Spleen (tissue), 13 donors: ENCODE measurements at regions of chr20 and their contacts with region 1.

Region 1: GRCh38 chr20:36199345-36200257 is 36.7 kb upstream of the AAR2 start:
- DNase-seq: peak; percentile 82
- H3K4me3 ChIP-seq: no peak overlapping the region
- H3K27ac ChIP-seq: no peak overlapping the region
- H3K4me1 ChIP-seq: peaks cover 0 to 14% (median 9%) of the 10 kb centered on the region in 6 donors
- H3K27me3 ChIP-seq: no peaks in the 10 kb centered on the region
- CTCF ChIP-seq: peak; percentile 69 to 93 (median 87)
- POLR2A ChIP-seq: no peak

Region 2: GRCh38 chr20:35741892-35742740 is 457.5 kb before region 1 on chr20 and contains the start of gene RBM39:
- intact Hi-C with region 1: no loop called
- DNase-seq: peak; percentile 99
- H3K4me3 ChIP-seq: peak within 1 kb of the TSS; percentile 64 to 88 (median 78)
- H3K27ac ChIP-seq: peak within 1 kb of the TSS; percentile 98 to 100 (median 100)
- H3K4me1 ChIP-seq: peaks cover 43 to 67% (median 57%) of the 10 kb centered on the region in 6 donors
- H3K27me3 ChIP-seq: no peaks in the 10 kb centered on the region
- CTCF ChIP-seq: peak; percentile 8 to 76 (median 62)
- POLR2A ChIP-seq: peak; percentile 96 to 98 (median 97)
- total RNA-seq, gene RBM39: 386 to 649 (median 405) TPM

Region 3: GRCh38 chr20:35994994-35995453 is 204.6 kb before region 1 on chr20:
- intact Hi-C with region 1: loop called (anchors 10 kb)
- DNase-seq: peak; percentile 93
- H3K4me3 ChIP-seq: no peak overlapping the region
- H3K27ac ChIP-seq: no peak overlapping the region
- H3K4me1 ChIP-seq: peaks cover 0 to 14% (median 5%) of the 10 kb centered on the region in 6 donors
- H3K27me3 ChIP-seq: no peaks in the 10 kb centered on the region
- CTCF ChIP-seq: peak; percentile 53 to 88 (median 82)
- POLR2A ChIP-seq: no peak

Region 4: GRCh38 chr20:36085686-36086267 is 113.8 kb before region 1 on chr20:
- intact Hi-C with region 1: no loop called
- DNase-seq: no peak
- H3K4me3 ChIP-seq: no peak overlapping the region
- H3K27ac ChIP-seq: no peak overlapping the region
- H3K4me1 ChIP-seq: no peaks in the 10 kb centered on the region
- H3K27me3 ChIP-seq: peaks cover 0 to 26% (median 2%) of the 10 kb centered on the region in 7 donors
- CTCF ChIP-seq: no peak
- POLR2A ChIP-seq: no peak

Region 5: DNA sequence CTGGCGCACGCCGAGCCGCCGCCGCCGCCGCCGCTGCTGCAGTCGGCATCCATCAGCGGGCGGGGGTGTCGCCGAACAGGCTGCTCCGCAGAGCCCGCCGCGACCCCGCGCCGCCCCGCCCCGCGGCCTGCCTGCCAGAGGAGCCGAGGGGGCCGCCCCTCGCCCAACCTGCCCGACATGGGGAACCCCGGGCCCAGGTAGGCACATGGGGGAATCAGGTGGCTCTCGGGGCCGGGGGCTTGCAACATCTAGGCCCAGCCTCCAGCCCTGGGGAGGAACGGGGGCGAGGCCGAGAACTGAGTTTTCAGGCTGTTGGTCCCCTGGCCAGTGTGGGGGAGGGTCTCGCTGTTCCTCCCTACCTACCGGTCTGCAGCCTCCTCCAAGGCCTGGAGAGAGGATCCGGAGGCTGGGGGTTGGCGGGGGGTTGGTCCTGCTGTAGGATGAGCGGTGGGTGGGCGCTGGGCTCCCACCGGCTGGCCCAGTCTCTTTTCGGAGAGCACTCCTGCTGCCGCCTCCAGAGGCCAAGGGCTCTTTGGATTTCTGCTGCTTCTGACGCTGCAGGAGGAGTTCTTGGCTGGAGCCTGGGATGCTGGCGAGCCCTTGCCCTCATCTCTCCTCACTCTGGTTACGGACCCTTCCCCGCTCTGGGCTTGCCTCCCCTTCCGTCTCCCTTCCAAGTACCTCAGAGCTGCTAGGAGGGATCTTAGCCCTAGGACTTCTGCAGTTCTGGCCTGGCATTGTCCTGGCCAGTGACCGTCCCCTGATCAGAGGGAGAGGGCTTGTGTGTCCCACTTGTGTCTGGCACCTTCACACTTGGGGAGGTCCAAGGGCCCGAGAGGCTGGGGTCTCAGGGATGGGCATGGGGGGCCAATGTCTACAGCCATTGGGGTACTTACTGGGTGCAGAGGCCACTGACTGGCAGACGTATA is 44.6 kb before region 1 on chr20 and contains the start of gene EPB41L1:
- intact Hi-C with region 1: loop called (anchors 5 kb)
- DNase-seq: no peak
- H3K4me3 ChIP-seq: peak within 1 kb of the TSS; percentile 36 to 73 (median 47)
- H3K27ac ChIP-seq: peak within 1 kb of the TSS in 7 of 8 donors; percentile 4 to 68 (median 57)
- H3K4me1 ChIP-seq: peaks cover 0 to 48% (median 25%) of the 10 kb centered on the region in 6 donors
- H3K27me3 ChIP-seq: peaks cover 0 to 35% (median 10%) of the 10 kb centered on the region in 7 donors
- CTCF ChIP-seq: no peak
- POLR2A ChIP-seq: no peak
- total RNA-seq, gene EPB41L1: 8.7 to 18.6 (median 16.2) TPM

Region 6: DNA sequence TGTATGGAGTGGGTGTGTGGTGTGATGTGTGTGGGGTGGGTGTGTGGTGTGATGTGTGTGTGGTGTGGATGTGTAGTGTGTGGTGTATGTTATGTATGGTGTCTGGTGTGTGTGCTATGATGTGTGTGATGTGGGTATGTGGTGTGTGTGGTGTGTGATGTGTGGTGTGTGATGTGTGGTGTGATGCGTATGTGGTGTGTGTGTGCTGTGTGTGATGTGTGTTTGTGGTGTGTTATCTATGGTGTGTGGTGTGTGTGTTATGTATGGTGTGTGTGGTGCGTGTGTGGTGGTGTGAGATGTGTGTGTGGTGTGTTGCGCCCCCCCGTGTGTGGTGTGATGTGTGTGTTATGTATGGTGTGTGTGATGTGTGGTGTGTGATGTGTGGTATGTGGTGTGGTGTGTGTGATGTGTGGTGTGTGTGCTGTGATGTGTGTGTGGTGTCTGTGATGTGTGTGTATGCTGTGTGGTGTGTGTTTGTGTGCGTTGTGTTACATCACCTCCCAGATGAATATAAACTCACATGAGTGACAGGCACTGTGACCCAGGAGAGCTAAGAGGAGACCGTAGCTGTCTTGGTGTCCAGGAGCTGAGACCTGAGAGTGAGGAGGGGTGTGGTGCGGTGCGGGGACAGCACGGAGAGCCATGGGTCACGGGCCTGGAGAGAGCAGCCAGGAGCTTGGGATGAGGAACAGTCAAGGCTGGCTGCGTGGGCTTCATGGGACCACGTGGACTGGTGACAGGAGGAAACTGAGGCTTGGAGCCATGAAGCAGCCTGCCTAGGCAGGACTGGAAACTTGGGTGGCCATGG is 115.3 kb after region 1 on chr20:
- intact Hi-C with region 1: no loop called
- DNase-seq: peak; percentile 5
- H3K4me3 ChIP-seq: no peak overlapping the region
- H3K27ac ChIP-seq: no peak overlapping the region
- H3K4me1 ChIP-seq: no peaks in the 10 kb centered on the region
- H3K27me3 ChIP-seq: peaks cover 0 to 57% (median 0%) of the 10 kb centered on the region in 7 donors
- CTCF ChIP-seq: no peak
- POLR2A ChIP-seq: no peak

Region 7: GRCh38 chr20:36439040-36439730 is 239.6 kb after region 1 on chr20:
- intact Hi-C with region 1: loop called (anchors 2 kb)
- DNase-seq: peak; percentile 88
- H3K4me3 ChIP-seq: no peak overlapping the region
- H3K27ac ChIP-seq: no peak overlapping the region
- H3K4me1 ChIP-seq: peaks cover 4 to 18% (median 12%) of the 10 kb centered on the region in 6 donors
- H3K27me3 ChIP-seq: peaks cover 0 to 15% (median 0%) of the 10 kb centered on the region in 7 donors
- CTCF ChIP-seq: peak; percentile 67 to 92 (median 85)
- POLR2A ChIP-seq: no peak